Activated T-helper 1 cell treated with anti-CD3 and anti-CD28 coated beads, Interleukin-12 subunit alpha, Interleukin-12 subunit beta, Interleukin-2, Interleukin-4 antibody, amounts not matched to agents 30 ng/mL and 10 ng/mL and 1 ng/mL, durations not matched to agents 14 hours and 24 hours and 36 hours (primary cell): ENCODE measurements at regions of chr6 and their contacts with region 1.

Region 1: DNA sequence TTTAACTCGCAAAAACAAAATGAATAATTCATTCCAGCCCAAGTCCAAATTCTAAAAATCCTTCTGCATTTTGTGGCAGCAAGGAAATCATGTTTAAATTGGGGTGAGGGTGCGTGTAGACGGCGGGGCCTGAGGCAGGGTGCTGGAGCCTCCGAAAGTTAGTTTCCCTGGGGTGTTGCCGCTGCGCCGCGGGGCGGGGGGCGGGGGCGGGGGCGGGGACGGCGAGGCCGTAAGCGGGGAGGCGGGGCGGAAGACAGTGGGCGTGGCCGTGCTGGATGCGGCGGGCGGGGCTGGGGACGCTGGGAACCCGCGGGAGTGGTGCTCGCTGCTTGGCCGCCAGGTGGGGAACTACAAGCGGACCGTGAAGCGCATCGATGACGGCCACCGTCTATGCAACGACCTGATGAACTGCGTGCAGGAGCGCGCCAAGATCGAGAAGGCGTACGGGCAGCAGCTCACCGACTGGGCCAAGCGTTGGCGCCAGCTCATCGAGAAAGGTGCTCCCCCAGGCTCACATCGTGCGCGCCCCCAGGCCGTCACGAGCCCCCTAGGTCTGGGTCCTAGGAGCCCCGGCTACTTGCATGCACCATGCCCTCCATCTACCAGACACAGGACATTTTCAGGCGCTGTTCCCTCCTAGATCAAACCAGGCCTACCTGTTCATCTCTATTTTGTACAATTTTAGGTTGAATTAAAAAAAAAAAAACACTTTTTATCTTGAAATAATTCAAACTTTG is 29.0 kb downstream of the SPDEF start:
- DNase-seq: peak; percentile 91
- H3K4me3 Mint-ChIP-seq: peak overlapping the region; percentile 6
- H3K27ac Mint-ChIP-seq: no peak overlapping the region
- H3K4me1 Mint-ChIP-seq: no peaks in the 10 kb centered on the region
- H3K27me3 Mint-ChIP-seq: peaks cover 6% of the 10 kb centered on the region

Region 2: GRCh38 chr6:34223956-34224940 is 302.9 kb before region 1 on chr6:
- intact Hi-C with region 1: loop called (anchors 5 kb)
- DNase-seq: peak; percentile 91
- H3K4me3 Mint-ChIP-seq: peak overlapping the region; percentile 64
- H3K27ac Mint-ChIP-seq: peak overlapping the region; percentile 76
- H3K4me1 Mint-ChIP-seq: peaks cover 28% of the 10 kb centered on the region
- H3K27me3 Mint-ChIP-seq: peaks cover 7% of the 10 kb centered on the region

Region 3: DNA sequence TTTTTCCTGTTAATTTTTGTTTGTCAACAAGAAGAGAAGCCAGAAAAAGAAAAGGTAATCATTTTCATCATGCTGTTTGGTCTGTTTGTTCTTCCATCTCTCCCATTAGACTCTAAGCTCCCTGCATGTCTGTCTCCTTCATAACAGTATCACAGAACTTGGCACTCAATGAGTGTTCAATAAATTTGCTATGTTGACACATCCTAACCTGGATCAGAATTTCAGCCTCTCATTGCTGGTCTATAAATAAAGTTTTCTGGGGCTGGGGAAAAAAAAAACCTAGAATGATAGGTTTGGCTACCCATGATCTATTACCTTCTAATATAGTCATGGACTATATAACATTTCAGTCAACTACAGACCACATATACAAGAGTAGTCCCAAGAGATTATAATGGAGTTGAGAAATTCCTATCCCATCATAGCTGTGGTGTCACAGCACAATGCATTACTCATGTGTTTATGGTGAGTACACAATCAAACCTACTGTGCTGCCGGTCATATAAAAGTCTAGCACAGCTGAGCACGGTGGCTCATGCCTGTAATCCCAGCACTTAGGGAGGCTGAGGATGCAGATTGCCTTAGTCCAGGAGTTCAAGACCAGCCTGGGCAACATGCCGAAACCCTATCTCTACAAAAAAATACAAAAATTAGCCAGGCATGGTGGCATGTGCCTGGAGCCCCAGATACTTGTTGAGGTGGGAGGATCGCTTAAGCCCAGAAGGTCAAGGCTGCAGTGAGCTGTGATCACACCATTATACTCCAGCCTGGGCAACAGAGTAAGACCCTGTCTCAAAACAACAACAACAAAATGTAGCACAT is 140.6 kb before region 1 on chr6:
- intact Hi-C with region 1: no loop called
- DNase-seq: no peak
- H3K4me3 Mint-ChIP-seq: no peak overlapping the region
- H3K27ac Mint-ChIP-seq: no peak overlapping the region
- H3K4me1 Mint-ChIP-seq: peaks cover 10% of the 10 kb centered on the region
- H3K27me3 Mint-ChIP-seq: no peaks in the 10 kb centered on the region

Region 4: GRCh38 chr6:34459899-34460593 is 67.1 kb before region 1 on chr6:
- intact Hi-C with region 1: loop called (anchors 1 kb)
- DNase-seq: peak; percentile 34
- H3K4me3 Mint-ChIP-seq: no peak overlapping the region
- H3K27ac Mint-ChIP-seq: no peak overlapping the region
- H3K4me1 Mint-ChIP-seq: no peaks in the 10 kb centered on the region
- H3K27me3 Mint-ChIP-seq: peaks cover 13% of the 10 kb centered on the region

Region 5: DNA sequence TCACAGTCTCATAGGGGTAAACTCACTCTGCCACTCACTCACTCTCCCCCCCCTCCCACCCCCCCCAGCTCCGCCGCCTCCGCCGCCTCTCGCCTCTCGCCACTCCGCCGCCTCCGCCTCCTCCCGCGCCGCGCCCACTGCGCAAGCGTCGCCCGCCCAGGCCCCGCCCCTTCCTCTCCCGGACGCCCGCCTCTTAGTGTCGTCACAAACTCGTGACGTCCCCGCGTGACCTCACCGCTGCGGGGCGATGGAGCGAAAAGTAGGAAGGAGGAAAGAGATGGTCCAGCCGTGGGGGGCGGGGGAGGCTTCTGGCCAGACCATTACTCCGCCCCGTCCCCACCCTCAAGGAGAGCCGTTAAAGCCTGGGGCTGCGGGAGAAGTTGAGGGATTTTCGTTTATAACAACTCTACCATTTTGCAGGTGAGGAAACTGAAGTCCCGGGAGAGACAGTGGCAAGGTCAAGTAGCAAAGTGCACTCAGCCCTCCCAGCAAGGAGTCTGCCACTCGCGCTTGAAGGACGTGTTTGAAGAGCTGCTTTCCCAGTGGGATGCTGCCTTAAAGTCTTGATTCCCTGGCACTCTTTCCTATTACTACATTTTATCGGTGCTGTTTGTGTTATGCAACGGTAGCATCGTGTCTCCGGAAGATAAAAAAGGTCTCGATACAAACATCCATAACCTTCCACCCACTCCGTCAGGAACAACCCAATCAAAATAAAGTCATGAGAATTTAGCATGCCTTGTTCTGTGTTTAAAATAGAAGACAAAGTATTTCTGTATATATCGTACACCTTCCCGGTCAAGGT is 169.8 kb after region 1 on chr6 and contains the start of gene ILRUN:
- intact Hi-C with region 1: loop called (anchors 2 kb)
- DNase-seq: peak; percentile 93
- H3K4me3 Mint-ChIP-seq: peak within 1 kb of the TSS; percentile 92
- H3K27ac Mint-ChIP-seq: peak within 1 kb of the TSS; percentile 98
- H3K4me1 Mint-ChIP-seq: peaks cover 39% of the 10 kb centered on the region
- H3K27me3 Mint-ChIP-seq: peaks cover 4% of the 10 kb centered on the region
- total RNA-seq, gene ILRUN: 62.7 and 64.4 TPM in 2 replicates

Region 6: DNA sequence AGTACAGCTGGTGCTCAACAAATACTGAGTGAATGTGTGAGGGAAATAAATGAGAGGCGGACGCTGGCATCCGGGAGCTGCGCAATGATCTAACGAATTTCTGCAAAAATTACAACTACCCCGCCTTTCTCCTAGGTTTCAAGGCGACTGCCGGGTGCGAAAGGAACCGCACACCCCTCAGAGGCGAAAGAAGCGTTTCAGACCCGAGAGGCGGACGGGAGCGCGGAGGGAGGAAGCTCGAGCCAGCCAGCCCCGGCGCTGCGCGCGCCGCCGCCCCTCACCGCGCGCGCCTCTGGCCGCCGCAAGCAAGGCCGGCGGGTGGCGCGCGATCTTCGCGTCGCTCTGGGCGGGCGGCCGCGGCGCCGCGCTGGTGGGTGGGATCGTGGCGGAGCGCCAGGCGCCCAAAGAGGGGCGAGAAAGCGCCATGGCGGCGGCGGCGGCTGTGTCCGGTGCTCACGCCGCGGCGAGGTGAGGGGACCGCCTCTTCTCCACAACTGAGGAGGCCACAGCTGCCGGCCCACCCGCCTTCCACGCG is 264.6 kb after region 1 on chr6 and contains the start of gene BLTP3A:
- intact Hi-C with region 1: loop called (anchors 1 kb)
- DNase-seq: peak; percentile 76
- H3K4me3 Mint-ChIP-seq: peak within 1 kb of the TSS; percentile 99
- H3K27ac Mint-ChIP-seq: peak within 1 kb of the TSS; percentile 97
- H3K4me1 Mint-ChIP-seq: peaks cover 29% of the 10 kb centered on the region
- H3K27me3 Mint-ChIP-seq: no peaks in the 10 kb centered on the region
- total RNA-seq, gene BLTP3A: 17.2 and 17.8 TPM in 2 replicates